ENCODE measurements at regions of chr15 and their contacts with region 1.

Region 1: GRCh38 chr15:61834076-61834697 is 226.1 kb downstream of the VPS13C start:
- DNase-seq: peak; percentile 84
- ATAC-seq: peak; percentile 85
- H3K4me3 Mint-ChIP-seq: no peak overlapping the region
- H3K27ac Mint-ChIP-seq: no peak overlapping the region
- H3K4me1 Mint-ChIP-seq: peaks cover 3% of the 10 kb centered on the region
- H3K27me3 Mint-ChIP-seq: peaks cover 19% of the 10 kb centered on the region
- CTCF ChIP-seq: peak; percentile 95

Region 2: GRCh38 chr15:61169904-61170695 is 664.1 kb before region 1 on chr15:
- CTCF ChIA-PET with region 1: interaction called, 22 read pairs
- POLR2A ChIA-PET with region 1: no interaction called
- intact Hi-C with region 1: loop called (anchors 5 kb)
- DNase-seq: peak; percentile 16
- ATAC-seq: peak; percentile 79
- H3K4me3 Mint-ChIP-seq: no peak overlapping the region
- H3K27ac Mint-ChIP-seq: no peak overlapping the region
- H3K4me1 Mint-ChIP-seq: peaks cover 16% of the 10 kb centered on the region
- H3K27me3 Mint-ChIP-seq: peaks cover 13% of the 10 kb centered on the region
- CTCF ChIP-seq: no peak

Region 3: GRCh38 chr15:61195116-61196002 is 638.8 kb before region 1 on chr15:
- CTCF ChIA-PET with region 1: interaction called, 22 read pairs
- POLR2A ChIA-PET with region 1: no interaction called
- intact Hi-C with region 1: no loop called
- DNase-seq: peak; percentile 9
- ATAC-seq: peak; percentile 42
- H3K4me3 Mint-ChIP-seq: no peak overlapping the region
- H3K27ac Mint-ChIP-seq: no peak overlapping the region
- H3K4me1 Mint-ChIP-seq: no peaks in the 10 kb centered on the region
- H3K27me3 Mint-ChIP-seq: peaks cover 6% of the 10 kb centered on the region
- CTCF ChIP-seq: peak; percentile 78

Region 4: DNA sequence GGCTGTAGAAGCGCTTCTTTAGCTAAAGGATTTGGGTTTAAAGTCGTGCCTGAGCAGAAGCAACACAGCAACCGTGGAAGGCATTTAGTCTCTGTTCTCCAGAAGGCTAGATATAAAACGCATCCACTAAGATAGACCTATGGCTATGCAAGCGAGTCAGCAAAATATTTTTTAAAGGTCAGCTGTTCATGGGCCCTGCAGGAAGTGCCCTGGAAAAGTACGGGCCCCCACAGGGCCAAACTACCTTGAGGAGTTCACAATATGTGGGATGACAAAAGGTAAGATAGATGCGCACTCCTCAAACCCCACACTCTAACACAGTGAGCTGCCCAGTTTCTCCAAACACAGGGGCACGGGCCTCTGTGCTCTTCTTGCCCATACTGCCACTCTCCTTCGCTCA is 35.6 kb before region 1 on chr15:
- CTCF ChIA-PET with region 1: interaction called, 11 read pairs
- POLR2A ChIA-PET with region 1: no interaction called
- intact Hi-C with region 1: no loop called
- DNase-seq: no peak
- ATAC-seq: no peak
- H3K4me3 Mint-ChIP-seq: no peak overlapping the region
- H3K27ac Mint-ChIP-seq: no peak overlapping the region
- H3K4me1 Mint-ChIP-seq: no peaks in the 10 kb centered on the region
- H3K27me3 Mint-ChIP-seq: peaks cover 7% of the 10 kb centered on the region
- CTCF ChIP-seq: no peak

Region 5: DNA sequence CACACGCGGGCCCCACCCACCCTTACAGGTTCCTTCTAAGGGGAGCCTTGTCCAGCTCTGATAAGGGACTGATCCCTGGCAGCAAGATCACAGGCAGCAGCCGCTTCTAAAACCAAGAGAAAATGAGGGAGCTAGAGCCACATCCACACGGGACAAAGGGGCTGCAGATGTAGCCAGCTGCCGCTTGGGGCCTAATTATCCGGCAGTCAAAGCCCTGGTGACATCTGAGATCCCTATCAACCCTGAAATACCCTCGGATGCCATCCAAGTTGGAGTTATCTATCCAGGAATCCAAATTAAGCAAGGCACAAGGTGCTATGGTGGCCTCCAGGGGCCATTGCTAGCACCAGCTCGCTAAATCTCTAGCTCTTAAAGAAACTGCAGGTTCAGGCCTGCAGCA is 22.2 kb before region 1 on chr15:
- CTCF ChIA-PET with region 1: interaction called, 22 read pairs
- POLR2A ChIA-PET with region 1: no interaction called
- intact Hi-C with region 1: no loop called
- DNase-seq: no peak
- ATAC-seq: no peak
- H3K4me3 Mint-ChIP-seq: no peak overlapping the region
- H3K27ac Mint-ChIP-seq: no peak overlapping the region
- H3K4me1 Mint-ChIP-seq: no peaks in the 10 kb centered on the region
- H3K27me3 Mint-ChIP-seq: peaks cover 5% of the 10 kb centered on the region
- CTCF ChIP-seq: no peak

Region 6: DNA sequence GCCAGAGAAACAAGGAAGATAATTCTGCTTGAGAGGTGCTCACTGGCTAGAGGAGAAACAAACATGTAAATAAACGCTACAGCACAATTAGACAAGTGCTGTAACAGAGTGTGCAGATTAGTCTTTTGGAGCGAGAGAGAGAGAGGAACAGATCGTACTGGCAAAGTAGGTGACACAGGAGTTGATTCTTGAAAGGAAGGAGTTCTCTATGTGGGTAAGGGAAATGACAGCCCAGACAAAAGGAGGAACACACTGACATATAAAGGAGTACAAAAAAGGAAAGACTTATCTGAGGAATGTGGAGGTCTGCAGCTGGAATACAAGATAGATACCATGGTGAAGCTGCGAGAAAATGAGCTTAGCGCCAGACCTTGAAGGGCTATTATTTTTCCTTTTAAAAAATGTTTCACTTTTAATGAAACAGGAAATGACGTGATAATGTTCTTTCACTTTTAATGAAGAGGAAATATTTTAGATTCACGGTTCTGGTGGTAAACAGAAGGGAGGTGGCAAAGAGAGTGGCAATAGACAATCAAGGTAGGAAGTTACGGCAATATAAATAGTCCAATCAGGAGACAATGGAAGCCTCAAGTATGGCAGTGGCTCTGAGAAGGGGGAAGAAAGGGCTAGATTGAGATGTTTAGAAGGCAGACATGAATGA is 23.1 kb after region 1 on chr15:
- CTCF ChIA-PET with region 1: interaction called, 12 read pairs
- POLR2A ChIA-PET with region 1: no interaction called
- intact Hi-C with region 1: no loop called
- DNase-seq: no peak
- ATAC-seq: peak; percentile 74
- H3K4me3 Mint-ChIP-seq: no peak overlapping the region
- H3K27ac Mint-ChIP-seq: no peak overlapping the region
- H3K4me1 Mint-ChIP-seq: no peaks in the 10 kb centered on the region
- H3K27me3 Mint-ChIP-seq: no peaks in the 10 kb centered on the region
- CTCF ChIP-seq: no peak

Measured in activated CD8-positive, alpha-beta T cell treated with anti-CD3 and anti-CD28 coated beads for 36 hours (primary cell).